ENCODE measurements at regions of chr5 and their contacts with region 1.

Region 1: DNA sequence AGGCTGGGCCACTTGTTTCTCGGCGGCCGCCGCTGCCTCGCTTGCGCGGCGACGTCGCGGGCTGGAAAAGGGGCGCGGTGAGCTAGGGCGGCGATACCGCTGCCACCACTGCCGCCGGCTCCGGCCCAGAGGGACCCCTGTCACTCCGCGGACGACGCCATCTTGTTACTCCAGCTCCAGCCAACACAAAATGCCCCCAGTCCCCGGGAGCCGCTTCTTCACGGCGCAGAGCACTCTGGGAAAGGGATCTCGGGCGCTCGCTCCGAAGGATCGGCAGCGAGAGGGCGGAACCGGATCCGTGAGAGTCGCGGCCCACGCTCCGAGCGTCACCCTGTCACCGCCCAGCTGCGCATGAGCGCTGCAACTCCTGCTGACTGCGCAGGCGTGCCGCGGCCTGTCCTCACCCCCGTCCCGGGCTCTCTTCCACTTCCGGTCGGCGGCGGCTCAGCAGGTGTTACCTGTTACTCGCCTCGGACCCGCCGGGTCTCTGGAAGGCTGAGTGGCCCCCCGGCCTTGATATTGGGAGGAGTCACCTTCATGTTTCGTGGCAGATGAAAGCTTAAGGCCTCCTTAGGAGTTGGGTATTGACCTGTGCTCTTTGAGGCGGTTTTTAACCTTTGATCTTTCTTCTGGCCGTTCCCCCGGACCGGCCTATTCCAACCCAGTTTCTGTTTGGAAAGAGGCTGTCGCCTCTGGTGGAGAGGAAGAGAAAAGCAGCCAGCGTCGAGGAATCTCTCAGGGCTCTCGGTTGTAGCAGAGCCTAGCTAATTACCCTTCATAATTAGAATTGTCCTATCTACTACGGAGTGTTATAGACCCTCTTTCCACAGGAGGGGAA is at the start of gene CSNK1A1:
- DNase-seq: peak; percentile 99 to 100
- H3K4me3 ChIP-seq: peak within 1 kb of the TSS; percentile 68 to 83 (median 80)
- H3K27ac ChIP-seq: peak within 1 kb of the TSS; percentile 94 to 99 (median 98)
- H3K4me1 ChIP-seq: peaks cover 26 to 42% (median 33%) of the 10 kb centered on the region in 4 donors
- H3K27me3 ChIP-seq: no peaks in the 10 kb centered on the region
- CTCF ChIP-seq: peak in 5 of 7 experiments; percentile 73 to 94 (median 87)
- EP300 ChIP-seq: no peak
- POLR2A ChIP-seq: peak in 2 of 4 donors; percentile 76 to 81
- total RNA-seq, gene CSNK1A1: 171 to 408 (median 217) TPM

Region 2: DNA sequence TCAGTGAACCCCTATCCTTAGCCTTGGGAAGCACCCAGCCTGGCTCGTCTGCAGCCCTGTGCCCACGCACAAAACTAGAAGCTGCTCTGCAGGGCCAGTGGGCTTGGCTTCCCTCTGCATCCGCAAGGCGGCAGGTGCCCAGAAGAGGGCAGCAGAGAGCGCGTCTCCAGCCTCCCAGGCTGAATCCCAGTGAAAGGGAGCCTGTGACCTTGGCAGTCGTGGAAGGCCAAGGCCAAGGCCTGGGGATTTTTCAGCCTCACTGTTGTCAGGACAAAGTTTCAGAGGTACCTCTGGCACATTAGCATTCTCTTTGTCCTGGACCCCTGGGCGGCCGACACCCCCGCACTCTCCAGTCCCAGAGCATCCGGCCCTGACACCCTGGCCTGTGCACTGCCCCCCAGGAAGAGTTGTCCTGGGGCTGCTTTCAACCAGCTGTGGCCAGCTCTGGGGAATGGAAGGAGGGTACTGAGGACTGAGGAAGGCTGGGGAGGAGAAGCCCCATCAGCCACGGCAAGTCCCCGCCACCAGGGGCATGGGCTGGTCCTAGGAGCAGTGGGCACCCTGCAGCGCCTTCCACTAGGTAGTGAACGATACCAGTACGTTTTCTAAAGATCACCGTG is 108.7 kb before region 1 on chr5:
- intact Hi-C with region 1: loop called (anchors 5 kb)
- DNase-seq: peak; percentile 90 to 93
- H3K4me3 ChIP-seq: no peak overlapping the region
- H3K27ac ChIP-seq: peak overlapping the region; percentile 37 to 89 (median 74)
- H3K4me1 ChIP-seq: peaks cover 8 to 60% (median 22%) of the 10 kb centered on the region in 4 donors
- H3K27me3 ChIP-seq: no peaks in the 10 kb centered on the region
- CTCF ChIP-seq: peak in 5 of 7 experiments; percentile 86 to 94 (median 91)
- EP300 ChIP-seq: no peak
- POLR2A ChIP-seq: no peak

Region 3: DNA sequence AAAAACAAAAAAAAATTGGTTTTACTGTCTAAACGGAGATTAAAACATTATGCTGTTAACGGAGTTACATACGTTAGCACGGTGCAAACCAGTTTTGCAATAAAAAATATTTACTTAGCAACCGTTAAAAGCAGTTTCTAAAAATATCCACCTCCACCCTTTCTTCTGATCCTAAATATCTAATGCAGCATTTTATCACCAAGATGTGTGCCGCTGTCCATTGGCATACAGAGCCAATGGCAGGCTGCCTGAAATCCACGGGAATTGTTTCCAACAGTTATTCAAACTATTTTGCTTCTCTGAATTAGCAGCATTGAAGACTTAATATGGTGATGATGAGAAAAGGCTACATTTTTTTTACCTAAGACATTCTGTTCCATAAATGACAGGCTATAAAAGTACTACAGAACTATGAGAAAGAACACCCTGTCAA is 61.8 kb before region 1 on chr5:
- intact Hi-C with region 1: loop called (anchors 10 kb)
- DNase-seq: peak in 1 of 2 donors; percentile 77
- H3K4me3 ChIP-seq: no peak overlapping the region
- H3K27ac ChIP-seq: peak overlapping the region in 3 of 5 donors; percentile 10 to 87 (median 87)
- H3K4me1 ChIP-seq: peaks cover 22 to 66% (median 40%) of the 10 kb centered on the region in 4 donors
- H3K27me3 ChIP-seq: no peaks in the 10 kb centered on the region
- CTCF ChIP-seq: no peak
- EP300 ChIP-seq: peak; percentile 41
- POLR2A ChIP-seq: no peak

Measured in stomach (tissue), 19 donors.